Right cardiac atrium (tissue), 5 donors: ENCODE measurements at regions of chr3 and their contacts with region 1.

Region 1: GRCh38 chr3:57100046-57100695 is 39.7 kb downstream of the SPATA12 start:
- DNase-seq: peak in 2 of 3 donors; percentile 55 to 62
- ATAC-seq: peak; percentile 75 to 84
- H3K4me3 ChIP-seq: no peak overlapping the region
- H3K27ac ChIP-seq: no peak overlapping the region
- H3K4me1 ChIP-seq: no peaks in the 10 kb centered on the region
- H3K27me3 ChIP-seq: no peaks in the 10 kb centered on the region

Region 2: DNA sequence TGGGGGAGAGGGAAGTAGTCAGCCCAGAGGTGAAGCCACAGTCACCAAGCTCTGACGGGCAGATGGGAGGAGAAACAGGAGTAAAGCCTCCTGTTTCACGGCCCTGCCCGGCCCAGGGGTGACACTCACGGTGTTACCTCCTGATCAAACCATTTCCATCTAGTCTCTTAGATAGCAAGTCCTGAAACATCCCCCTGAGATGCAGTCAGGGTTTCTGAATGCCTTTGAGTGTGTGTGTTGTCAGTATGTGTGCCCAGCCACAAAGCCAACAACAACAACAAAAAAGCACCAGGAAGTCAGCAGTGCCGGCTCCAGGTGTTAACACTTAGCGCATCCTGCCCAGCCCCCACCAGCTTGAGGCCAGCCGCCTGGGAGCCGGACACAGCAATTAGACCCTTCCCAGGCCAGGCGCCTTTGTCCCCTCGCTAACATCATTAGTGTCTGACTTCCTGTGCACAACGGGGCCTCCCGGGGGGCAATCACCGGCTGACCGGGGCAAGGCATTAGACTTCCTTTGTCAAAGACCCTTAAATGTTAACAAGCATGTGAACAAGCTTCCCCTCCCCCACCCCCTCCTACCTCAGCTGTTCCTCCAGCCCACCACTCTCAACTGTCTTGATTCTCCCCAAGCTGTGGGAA is 30.5 kb after region 1 on chr3:
- intact Hi-C with region 1: no loop called
- DNase-seq: peak in 1 of 3 donors; percentile 48
- ATAC-seq: peak in 1 of 2 donors; percentile 16
- H3K4me3 ChIP-seq: no peak overlapping the region
- H3K27ac ChIP-seq: no peak overlapping the region
- H3K4me1 ChIP-seq: no peaks in the 10 kb centered on the region
- H3K27me3 ChIP-seq: no peaks in the 10 kb centered on the region

Region 3: GRCh38 chr3:57221883-57222282 is 121.7 kb after region 1 on chr3:
- intact Hi-C with region 1: loop called in 3 of 4 experiments (anchors 5 kb)
- DNase-seq: no peak
- ATAC-seq: no peak
- H3K4me3 ChIP-seq: no peak overlapping the region
- H3K27ac ChIP-seq: no peak overlapping the region
- H3K4me1 ChIP-seq: no peaks in the 10 kb centered on the region
- H3K27me3 ChIP-seq: no peaks in the 10 kb centered on the region

Region 4: DNA sequence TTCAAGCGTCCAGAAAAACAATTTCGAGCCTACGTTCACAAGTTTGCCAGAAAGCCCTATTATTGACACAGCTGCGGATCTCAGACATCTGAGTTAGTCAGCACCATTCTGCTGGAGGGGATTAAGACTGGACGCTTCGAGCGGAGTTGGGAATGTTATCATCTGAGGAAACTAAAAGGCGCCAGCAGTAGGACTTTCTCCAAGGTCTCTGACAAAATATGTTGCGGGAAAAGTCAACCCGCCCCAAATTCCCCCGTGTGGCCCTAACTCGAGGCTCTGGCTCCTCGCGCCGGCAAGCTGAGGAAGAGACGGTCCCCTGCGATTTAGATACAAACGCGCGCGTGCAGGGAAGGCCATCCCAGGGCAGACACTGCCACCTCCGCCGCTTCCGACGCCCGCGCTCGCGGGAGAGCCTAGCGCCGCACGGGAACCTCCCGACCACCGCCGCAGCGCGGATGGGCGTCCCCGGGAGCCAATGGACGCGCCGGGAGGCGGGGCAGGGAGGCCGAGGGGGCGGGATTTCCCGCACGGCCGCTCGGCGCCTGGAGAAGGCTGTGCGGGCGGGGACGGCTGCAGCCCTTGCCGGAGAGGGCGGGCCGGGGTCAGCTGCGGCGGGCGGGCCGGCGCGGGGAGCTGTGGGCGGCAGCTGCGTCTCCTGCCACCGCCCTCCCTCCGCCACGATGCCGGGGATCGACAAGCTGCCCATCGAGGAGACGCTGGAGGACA is 127.2 kb after region 1 on chr3 and contains the start of gene APPL1:
- intact Hi-C with region 1: loop called in 3 of 4 experiments (anchors 5 kb)
- DNase-seq: peak; percentile 94 to 98 (median 97)
- ATAC-seq: peak; percentile 99
- H3K4me3 ChIP-seq: peak within 1 kb of the TSS; percentile 73
- H3K27ac ChIP-seq: peak within 1 kb of the TSS; percentile 97
- H3K4me1 ChIP-seq: no peaks in the 10 kb centered on the region
- H3K27me3 ChIP-seq: no peaks in the 10 kb centered on the region
- total RNA-seq, gene APPL1: 33.7 to 39.5 (median 38.1) TPM